A549 (cell line): ENCODE measurements at regions of chr20 and their contacts with region 1.

Region 1: DNA sequence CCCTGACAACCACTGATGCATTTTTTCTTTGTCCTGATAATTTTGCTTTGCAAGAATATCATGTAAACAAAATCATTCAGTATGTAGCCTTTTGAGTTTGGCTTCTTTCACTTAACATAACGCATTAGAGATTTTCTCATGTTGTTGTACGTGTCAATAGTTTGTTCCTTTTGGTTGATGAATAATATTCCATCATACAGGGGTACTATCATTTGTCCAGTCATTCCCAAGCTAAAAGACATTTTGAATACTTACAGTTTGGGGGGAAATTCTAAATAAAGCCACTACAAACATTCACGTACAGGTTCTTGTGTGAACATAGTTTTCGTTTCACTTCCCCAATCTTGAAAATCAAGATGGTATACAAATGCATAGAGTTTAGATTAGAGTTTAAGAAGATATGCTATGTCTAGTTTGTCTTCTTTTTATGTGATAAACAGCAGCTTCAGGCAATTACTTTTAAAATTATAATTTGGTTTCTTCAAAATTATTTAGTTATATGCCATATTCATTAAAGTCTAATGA is 5.2 kb downstream of the HAO1 start:
- DNase-seq: no peak
- ATAC-seq: no peak
- H3K4me3 ChIP-seq: no peak overlapping the region
- H3K27ac ChIP-seq: no peak overlapping the region
- H3K4me1 ChIP-seq: no peaks in the 10 kb centered on the region
- CTCF ChIP-seq: no peak
- EP300 ChIP-seq: no peak
- POLR2A ChIP-seq: no peak
- RAD21 ChIP-seq: no peak

Region 2: GRCh38 chr20:7912551-7912950 is 22.5 kb before region 1 on chr20:
- CTCF ChIA-PET with region 1: interaction called, 10 read pairs
- POLR2A ChIA-PET with region 1: no interaction called
- DNase-seq: no peak
- ATAC-seq: no peak
- H3K4me3 ChIP-seq: no peak overlapping the region
- H3K27ac ChIP-seq: no peak overlapping the region
- H3K4me1 ChIP-seq: no peaks in the 10 kb centered on the region
- CTCF ChIP-seq: no peak
- EP300 ChIP-seq: no peak
- POLR2A ChIP-seq: no peak
- RAD21 ChIP-seq: no peak

Region 3: DNA sequence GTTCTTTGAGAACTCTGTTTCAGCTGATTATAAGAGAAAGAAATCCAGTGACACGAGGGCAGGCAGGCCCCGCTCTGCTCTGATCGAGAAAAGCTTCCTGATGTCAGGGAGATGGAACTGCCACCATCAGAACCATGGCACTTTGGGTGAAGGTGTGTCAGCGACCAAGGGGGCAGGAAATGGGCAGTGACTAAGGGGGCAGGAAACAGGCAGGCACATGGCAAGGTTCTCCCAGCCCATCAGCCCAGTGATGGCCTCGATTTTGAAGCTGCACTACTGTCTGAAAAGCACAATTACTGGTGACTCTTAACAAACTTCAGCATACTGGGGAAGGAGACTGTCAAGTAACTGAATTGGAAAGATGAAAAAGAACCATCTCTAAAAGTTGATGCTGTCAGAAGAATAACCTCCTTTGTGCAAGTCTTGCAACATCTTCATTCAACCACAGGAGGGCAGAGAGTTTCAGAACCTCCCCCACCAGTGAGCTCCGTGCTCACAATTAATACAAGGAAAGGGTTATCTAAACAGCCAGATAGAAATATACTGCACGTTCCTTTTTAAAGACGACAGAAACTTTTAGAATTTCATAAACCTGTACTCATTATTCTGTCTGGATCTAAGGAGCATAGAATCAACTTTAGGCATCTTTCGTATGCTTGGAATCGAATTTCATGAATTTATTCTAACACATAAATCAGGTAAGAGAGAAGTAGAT is 45.4 kb after region 1 on chr20:
- CTCF ChIA-PET with region 1: interaction called, 14 read pairs
- POLR2A ChIA-PET with region 1: no interaction called
- DNase-seq: peak; percentile 60 to 70
- ATAC-seq: peak; percentile 88 to 89
- H3K4me3 ChIP-seq: no peak overlapping the region
- H3K27ac ChIP-seq: no peak overlapping the region
- H3K4me1 ChIP-seq: peaks cover 15% of the 10 kb centered on the region; the same call in 2 of the 3 replicates
- CTCF ChIP-seq: peak; percentile 48; the same call in 2 of the 3 replicates
- EP300 ChIP-seq: no peak
- POLR2A ChIP-seq: no peak
- RAD21 ChIP-seq: peak; percentile 45 to 52

Region 4: DNA sequence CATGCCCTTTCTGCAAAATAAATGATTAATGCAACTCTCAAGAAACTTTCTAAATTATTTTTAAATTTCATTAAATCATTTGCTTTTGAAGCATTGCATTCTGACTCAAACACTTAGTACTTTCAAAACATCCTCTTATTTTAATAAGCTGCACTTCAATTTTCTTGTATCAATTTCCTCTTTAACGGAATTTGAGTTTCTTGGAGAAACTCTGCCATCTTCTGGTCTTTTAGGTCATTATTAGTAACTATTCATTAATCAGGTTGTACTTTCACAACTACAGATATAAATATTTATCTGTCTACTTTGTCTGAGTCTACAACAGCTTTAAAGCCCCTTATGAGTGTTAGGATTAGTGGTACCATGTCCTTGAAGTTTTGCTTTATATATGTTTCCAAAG is 54.3 kb after region 1 on chr20:
- CTCF ChIA-PET with region 1: interaction called, 14 read pairs
- POLR2A ChIA-PET with region 1: no interaction called
- DNase-seq: peak in 1 of 2 experiments; percentile 9
- ATAC-seq: no peak
- H3K4me3 ChIP-seq: no peak overlapping the region
- H3K27ac ChIP-seq: no peak overlapping the region
- H3K4me1 ChIP-seq: peaks cover 12% of the 10 kb centered on the region; the same call in 2 of the 3 replicates
- CTCF ChIP-seq: peak; percentile 37; the same call in 2 of the 3 replicates
- EP300 ChIP-seq: no peak
- POLR2A ChIP-seq: no peak
- RAD21 ChIP-seq: peak; percentile 47 to 53; a peak in 4 of 5 replicates

Region 5: DNA sequence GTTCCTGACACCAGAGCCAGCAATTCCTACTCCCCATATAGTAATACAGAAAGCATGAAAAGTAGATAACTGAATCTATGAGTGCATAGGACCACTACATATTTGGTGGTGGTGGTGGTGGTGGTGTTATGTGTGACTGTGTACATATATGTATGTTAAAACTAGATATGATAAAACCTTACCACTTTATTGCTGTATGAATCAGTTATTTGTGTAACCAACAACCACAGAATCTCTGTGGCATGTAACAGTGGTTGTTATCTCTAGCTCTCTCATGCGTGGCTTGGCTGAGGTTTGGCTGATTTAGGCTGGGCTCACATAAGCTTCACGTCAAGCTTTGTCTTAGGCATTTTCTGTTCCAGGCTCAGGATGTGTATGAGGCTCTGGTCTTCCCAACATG is 252.7 kb after region 1 on chr20:
- CTCF ChIA-PET with region 1: no interaction called
- POLR2A ChIA-PET with region 1: no interaction called
- DNase-seq: no peak
- ATAC-seq: no peak
- H3K4me3 ChIP-seq: no peak overlapping the region
- H3K27ac ChIP-seq: no peak overlapping the region
- H3K4me1 ChIP-seq: no peaks in the 10 kb centered on the region
- CTCF ChIP-seq: no peak
- EP300 ChIP-seq: no peak
- POLR2A ChIP-seq: no peak
- RAD21 ChIP-seq: no peak